CD4-positive, alpha-beta T cell (primary cell): ENCODE measurements at regions of chr6 and their contacts with region 1.

Region 1: GRCh38 chr6:35731736-35732532 is 4.9 kb upstream of the ARMC12 start:
- DNase-seq: peak; percentile 88 to 98 (median 94)
- ATAC-seq: peak; percentile 55
- H3K4me3 ChIP-seq: peak overlapping the region; percentile 87
- H3K4me3 Mint-ChIP-seq: peak overlapping the region; percentile 96
- H3K27ac ChIP-seq: peak overlapping the region; percentile 94 to 96
- H3K27ac Mint-ChIP-seq: peak overlapping the region; percentile 87
- H3K4me1 ChIP-seq: peaks cover 97% of the 10 kb centered on the region
- H3K4me1 Mint-ChIP-seq: peaks cover 92% of the 10 kb centered on the region
- H3K27me3 ChIP-seq: no peaks in the 10 kb centered on the region
- H3K27me3 Mint-ChIP-seq: no peaks in the 10 kb centered on the region
- CTCF ChIP-seq: no peak

Region 2: DNA sequence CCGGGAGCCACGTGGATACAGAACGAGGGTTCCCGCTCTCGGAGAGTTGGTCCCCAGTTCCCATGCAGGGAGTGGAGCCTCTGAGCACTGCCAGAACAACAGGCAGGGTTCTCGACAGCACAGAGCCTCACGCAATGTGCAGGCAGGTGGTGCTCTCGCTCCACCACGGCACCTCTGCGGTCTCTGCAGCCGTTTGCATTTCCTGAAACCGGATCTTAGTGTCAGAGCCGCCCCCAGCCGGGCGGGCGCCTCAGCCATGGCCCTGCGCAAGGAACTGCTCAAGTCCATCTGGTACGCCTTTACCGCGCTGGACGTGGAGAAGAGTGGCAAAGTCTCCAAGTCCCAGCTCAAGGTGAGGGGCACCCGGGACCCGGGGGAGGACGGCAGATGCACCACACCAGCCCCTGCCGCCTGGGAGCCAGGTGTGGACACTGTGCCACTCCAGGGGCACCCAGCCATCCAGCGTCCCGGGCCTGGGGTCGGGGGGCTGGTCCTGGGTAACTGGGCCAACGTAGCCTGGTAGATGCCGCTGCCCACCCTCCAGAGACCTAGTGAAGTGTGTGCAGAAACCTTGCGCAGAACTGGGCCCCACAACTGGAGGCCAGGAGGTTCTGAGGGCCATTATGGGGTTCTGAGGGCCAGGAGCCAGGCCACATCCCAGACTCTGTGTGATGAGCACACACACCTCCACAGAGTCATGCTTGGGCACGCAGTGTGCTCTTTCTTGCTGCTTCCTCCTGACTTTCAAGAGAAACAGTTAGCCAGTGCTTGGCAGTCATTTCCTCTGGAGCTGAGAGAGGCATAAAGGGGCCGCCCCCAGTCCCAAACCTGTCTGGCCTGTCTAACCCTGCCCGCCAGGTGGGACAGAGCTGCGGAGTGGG is 434.1 kb before region 1 on chr6 and contains the start of gene DEF6:
- CTCF ChIA-PET with region 1: no interaction called
- POLR2A ChIA-PET with region 1: interaction called, 3 read pairs
- intact Hi-C with region 1: loop called (anchors 1 to 2 kb)
- DNase-seq: peak; percentile 82 to 95 (median 88)
- ATAC-seq: peak; percentile 73
- H3K4me3 ChIP-seq: peak within 1 kb of the TSS; percentile 81
- H3K4me3 Mint-ChIP-seq: peak within 1 kb of the TSS; percentile 87
- H3K27ac ChIP-seq: peak within 1 kb of the TSS; percentile 88 to 91
- H3K27ac Mint-ChIP-seq: peak within 1 kb of the TSS; percentile 96
- H3K4me1 ChIP-seq: peaks cover 57% of the 10 kb centered on the region
- H3K4me1 Mint-ChIP-seq: peaks cover 57% of the 10 kb centered on the region
- H3K27me3 ChIP-seq: no peaks in the 10 kb centered on the region
- H3K27me3 Mint-ChIP-seq: no peaks in the 10 kb centered on the region
- CTCF ChIP-seq: peak; percentile 78
- total RNA-seq, gene DEF6: 209 to 212 TPM

Region 3: GRCh38 chr6:35468181-35468979 is 263.6 kb before region 1 on chr6 and contains the start of gene RPL10A:
- CTCF ChIA-PET with region 1: no interaction called
- POLR2A ChIA-PET with region 1: interaction called, 3 read pairs
- intact Hi-C with region 1: loop called (anchors 2 to 5 kb)
- DNase-seq: peak; percentile 91 to 98 (median 96)
- ATAC-seq: peak; percentile 83
- H3K4me3 ChIP-seq: peak within 1 kb of the TSS; percentile 98
- H3K4me3 Mint-ChIP-seq: peak within 1 kb of the TSS; percentile 99
- H3K27ac ChIP-seq: peak within 1 kb of the TSS; percentile 65 to 92
- H3K27ac Mint-ChIP-seq: peak within 1 kb of the TSS; percentile 100
- H3K4me1 ChIP-seq: peaks cover 49% of the 10 kb centered on the region
- H3K4me1 Mint-ChIP-seq: peaks cover 42% of the 10 kb centered on the region
- H3K27me3 ChIP-seq: no peaks in the 10 kb centered on the region
- H3K27me3 Mint-ChIP-seq: no peaks in the 10 kb centered on the region
- CTCF ChIP-seq: peak; percentile 91
- total RNA-seq, gene RPL10A: 2,453 to 2,464 TPM

Region 4: DNA sequence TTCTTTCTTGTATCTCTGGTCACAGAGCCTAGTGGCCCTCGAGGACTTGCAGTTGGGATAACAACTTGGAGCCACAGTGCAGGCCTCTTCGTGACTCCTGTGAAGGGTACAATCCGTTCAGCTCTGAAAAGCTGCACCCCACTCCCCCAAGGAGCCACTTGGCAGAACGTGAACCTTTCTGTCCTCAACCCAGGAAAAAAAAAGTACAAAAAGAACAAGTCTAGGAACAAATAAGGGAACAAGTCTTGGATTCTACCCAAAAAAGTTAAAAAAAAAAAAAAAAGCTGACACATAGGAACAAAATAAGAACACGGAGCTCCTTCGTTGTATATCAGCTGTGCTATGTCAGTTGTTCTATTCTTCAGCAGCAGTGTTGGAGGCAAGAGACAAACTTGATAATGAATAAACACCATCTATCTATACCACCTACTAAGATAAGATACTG is 141.3 kb before region 1 on chr6:
- CTCF ChIA-PET with region 1: interaction called, 60 read pairs
- POLR2A ChIA-PET with region 1: interaction called, 13 read pairs
- intact Hi-C with region 1: no loop called
- DNase-seq: no peak
- ATAC-seq: no peak
- H3K4me3 ChIP-seq: no peak overlapping the region
- H3K4me3 Mint-ChIP-seq: no peak overlapping the region
- H3K27ac ChIP-seq: no peak overlapping the region
- H3K27ac Mint-ChIP-seq: peak overlapping the region; percentile 85
- H3K4me1 ChIP-seq: peaks cover 72% of the 10 kb centered on the region
- H3K4me1 Mint-ChIP-seq: peaks cover 93% of the 10 kb centered on the region
- H3K27me3 ChIP-seq: no peaks in the 10 kb centered on the region
- H3K27me3 Mint-ChIP-seq: no peaks in the 10 kb centered on the region
- CTCF ChIP-seq: no peak

Region 5: GRCh38 chr6:35640017-35640664 is 91.8 kb before region 1 on chr6:
- CTCF ChIA-PET with region 1: interaction called, 12 read pairs
- POLR2A ChIA-PET with region 1: interaction called, 7 read pairs
- intact Hi-C with region 1: no loop called
- DNase-seq: no peak
- ATAC-seq: no peak
- H3K4me3 ChIP-seq: no peak overlapping the region
- H3K4me3 Mint-ChIP-seq: no peak overlapping the region
- H3K27ac ChIP-seq: no peak overlapping the region
- H3K27ac Mint-ChIP-seq: peak overlapping the region; percentile 81
- H3K4me1 ChIP-seq: peaks cover 9% of the 10 kb centered on the region
- H3K4me1 Mint-ChIP-seq: peaks cover 71% of the 10 kb centered on the region
- H3K27me3 ChIP-seq: no peaks in the 10 kb centered on the region
- H3K27me3 Mint-ChIP-seq: no peaks in the 10 kb centered on the region
- CTCF ChIP-seq: no peak

Region 6: GRCh38 chr6:35683267-35683666 is 48.7 kb before region 1 on chr6:
- CTCF ChIA-PET with region 1: interaction called, 20 read pairs
- POLR2A ChIA-PET with region 1: interaction called, 69 read pairs
- intact Hi-C with region 1: loop called (anchors 1 kb)
- DNase-seq: no peak
- ATAC-seq: no peak
- H3K4me3 ChIP-seq: no peak overlapping the region
- H3K4me3 Mint-ChIP-seq: no peak overlapping the region
- H3K27ac ChIP-seq: no peak overlapping the region
- H3K27ac Mint-ChIP-seq: peak overlapping the region; percentile 59
- H3K4me1 ChIP-seq: peaks cover 36% of the 10 kb centered on the region
- H3K4me1 Mint-ChIP-seq: peaks cover 58% of the 10 kb centered on the region
- H3K27me3 ChIP-seq: no peaks in the 10 kb centered on the region
- H3K27me3 Mint-ChIP-seq: no peaks in the 10 kb centered on the region
- CTCF ChIP-seq: no peak

Region 7: GRCh38 chr6:35719830-35720733 is 11.9 kb before region 1 on chr6:
- CTCF ChIA-PET with region 1: interaction called, 24 read pairs
- POLR2A ChIA-PET with region 1: interaction called, 11 read pairs
- intact Hi-C with region 1: loop called in 1 of 2 experiments (anchors 2 kb)
- DNase-seq: peak in 5 of 14 experiments; percentile 34 to 70 (median 54)
- ATAC-seq: peak; percentile 47
- H3K4me3 ChIP-seq: peak overlapping the region; percentile 15
- H3K4me3 Mint-ChIP-seq: peak overlapping the region; percentile 73
- H3K27ac ChIP-seq: peak overlapping the region in 1 of 2 donors; percentile 49
- H3K27ac Mint-ChIP-seq: peak overlapping the region; percentile 84
- H3K4me1 ChIP-seq: peaks cover 70% of the 10 kb centered on the region
- H3K4me1 Mint-ChIP-seq: peaks cover 86% of the 10 kb centered on the region
- H3K27me3 ChIP-seq: no peaks in the 10 kb centered on the region
- H3K27me3 Mint-ChIP-seq: no peaks in the 10 kb centered on the region
- CTCF ChIP-seq: no peak

Region 8: DNA sequence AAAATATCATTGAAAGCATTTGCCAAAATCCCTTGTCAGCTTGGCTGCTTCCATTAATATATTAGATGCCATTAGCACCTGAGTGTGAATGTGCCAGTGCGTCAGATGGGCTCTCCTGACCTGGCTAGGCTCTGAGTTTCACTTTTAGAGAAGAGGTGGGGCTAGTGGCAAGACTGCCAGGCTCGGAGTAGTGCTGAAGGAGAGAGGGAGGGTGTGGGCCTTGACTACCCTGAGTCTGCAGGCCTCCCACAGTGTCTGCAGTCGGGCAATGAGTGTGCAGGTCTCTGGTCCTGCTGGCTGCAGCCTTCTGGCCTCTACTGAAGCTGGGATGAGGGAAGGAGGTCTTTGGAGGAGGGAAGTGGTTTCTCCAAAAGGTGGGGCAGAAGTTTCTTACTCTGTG is 503.4 kb after region 1 on chr6:
- CTCF ChIA-PET with region 1: no interaction called
- POLR2A ChIA-PET with region 1: no interaction called
- intact Hi-C with region 1: no loop called
- DNase-seq: no peak
- ATAC-seq: no peak
- H3K4me3 ChIP-seq: no peak overlapping the region
- H3K4me3 Mint-ChIP-seq: no peak overlapping the region
- H3K27ac ChIP-seq: no peak overlapping the region
- H3K27ac Mint-ChIP-seq: no peak overlapping the region
- H3K4me1 ChIP-seq: no peaks in the 10 kb centered on the region
- H3K4me1 Mint-ChIP-seq: peaks cover 5% of the 10 kb centered on the region
- H3K27me3 ChIP-seq: no peaks in the 10 kb centered on the region
- H3K27me3 Mint-ChIP-seq: no peaks in the 10 kb centered on the region
- CTCF ChIP-seq: no peak